ENCODE measurements at regions of chr3 and their contacts with region 1.

Region 1: GRCh38 chr3:42745776-42746454 is 27.1 kb downstream of the CCDC13 start:
- DNase-seq: no peak
- ATAC-seq: no peak

Region 2: GRCh38 chr3:42572278-42572677 is 173.6 kb before region 1 on chr3:
- intact Hi-C with region 1: loop called in 1 of 2 experiments (anchors 2 kb)
- DNase-seq: no peak
- ATAC-seq: peak in 1 of 2 donors; percentile 82

Region 3: DNA sequence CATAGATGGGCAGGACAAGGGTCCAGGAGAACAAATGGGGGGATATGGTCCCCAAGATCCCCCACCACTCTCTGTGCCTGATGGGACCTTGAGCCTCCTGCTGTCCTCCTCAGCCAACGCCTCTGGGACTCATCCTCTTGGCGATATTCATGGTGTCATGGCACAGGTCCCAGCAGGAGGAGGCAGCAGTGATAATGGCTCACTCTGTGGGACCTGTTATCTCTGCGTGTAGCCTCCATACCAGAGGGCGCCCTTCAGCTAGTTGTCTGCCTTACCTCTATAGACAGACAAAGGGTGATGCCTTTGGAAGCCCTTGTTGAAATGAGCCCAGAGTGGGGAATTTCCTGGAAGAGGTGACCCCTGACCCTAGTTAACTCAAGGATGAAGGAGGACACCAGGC is 85.0 kb before region 1 on chr3:
- intact Hi-C with region 1: loop called in 1 of 2 experiments (anchors 2 kb)
- DNase-seq: peak; percentile 63
- ATAC-seq: peak; percentile 44 to 63

Region 4: GRCh38 chr3:42701142-42702065 is 44.5 kb before region 1 on chr3:
- intact Hi-C with region 1: loop called in 1 of 2 experiments (anchors 2 kb)
- DNase-seq: peak; percentile 79
- ATAC-seq: peak; percentile 67 to 74

Region 5: GRCh38 chr3:43298292-43298691 is 552.4 kb after region 1 on chr3:
- intact Hi-C with region 1: no loop called
- DNase-seq: no peak
- ATAC-seq: peak; percentile 47 to 50

Measured in left cardiac atrium (tissue), 4 donors.